Motor neuron (in vitro differentiated cells): ENCODE measurements at regions of chr2 and their contacts with region 1.

Region 1: GRCh38 chr2:120879431-120880295 is 144.0 kb downstream of the GLI2 start:
- ATAC-seq: peak in 6 of 8 experiments; percentile 23 to 62 (median 50)
- H3K4me3 ChIP-seq: no peak overlapping the region
- H3K27ac ChIP-seq: no peak overlapping the region
- H3K4me1 ChIP-seq: peaks cover 51 to 65% of the 10 kb centered on the region in 2 donors

Region 2: GRCh38 chr2:120735746-120736170 is 143.9 kb before region 1 on chr2 and contains the start of gene GLI2:
- in situ Hi-C with region 1: loop called in 1 of 9 experiments (anchors 25 kb)
- ATAC-seq: peak; percentile 77 to 85 (median 82)
- H3K4me3 ChIP-seq: peak within 1 kb of the TSS; percentile 38 to 78 (median 47)
- H3K27ac ChIP-seq: peak within 1 kb of the TSS in 1 of 2 donors; percentile 55
- H3K4me1 ChIP-seq: peaks cover 36 to 38% of the 10 kb centered on the region in 2 donors
- total RNA-seq, gene GLI2: 0.45 to 11.1 (median 2.8) TPM

Region 3: GRCh38 chr2:121071034-121071504 is 191.4 kb after region 1 on chr2:
- in situ Hi-C with region 1: loop called in 1 of 9 experiments (anchors 25 kb)
- ATAC-seq: peak; percentile 12 to 46 (median 38)
- H3K4me3 ChIP-seq: no peak overlapping the region
- H3K27ac ChIP-seq: no peak overlapping the region
- H3K4me1 ChIP-seq: peaks cover 21 to 28% of the 10 kb centered on the region in 2 donors

Region 4: GRCh38 chr2:121185571-121186074 is 306.0 kb after region 1 on chr2:
- in situ Hi-C with region 1: no loop called
- ATAC-seq: peak in 3 of 8 experiments; percentile 41 to 76 (median 46)
- H3K4me3 ChIP-seq: no peak overlapping the region
- H3K27ac ChIP-seq: no peak overlapping the region
- H3K4me1 ChIP-seq: peaks cover 0 to 10% of the 10 kb centered on the region in 2 donors